ENCODE measurements at regions of chr10 and their contacts with region 1.

Region 1: DNA sequence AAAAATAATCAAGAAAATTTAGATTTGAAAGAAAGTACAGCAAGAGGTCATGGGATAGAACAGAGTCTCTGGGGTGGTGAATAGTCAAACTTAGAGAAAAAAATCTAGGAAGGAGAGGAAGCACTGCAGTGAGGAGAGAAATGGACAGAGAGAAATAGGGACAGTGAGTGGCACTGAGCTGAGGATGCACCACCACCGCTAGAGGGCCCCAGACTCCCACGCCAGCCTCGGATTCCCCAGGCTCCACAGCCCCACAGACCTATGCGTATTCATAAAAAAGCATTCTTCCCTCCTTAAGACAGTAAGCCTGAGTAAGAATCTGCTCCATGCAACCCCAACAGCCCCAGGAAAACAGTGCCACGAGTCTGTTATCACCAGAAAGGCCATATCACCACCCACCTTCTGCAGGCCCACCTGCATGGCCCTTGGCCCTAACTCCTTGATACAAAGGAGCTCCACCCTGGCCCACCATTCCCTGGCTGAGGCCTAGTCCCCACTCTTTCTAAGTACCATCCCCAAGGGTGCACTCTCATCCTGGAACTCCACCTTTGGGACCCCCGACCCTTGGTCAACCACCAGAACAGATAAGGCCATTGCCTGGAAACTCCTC is 91.0 kb downstream of the ALOX5 start:
- DNase-seq: peak; percentile 83
- ATAC-seq: peak; percentile 69
- H3K4me3 ChIP-seq: peak overlapping the region in 3 of 5 experiments; percentile 1 to 24 (median 10)
- H3K4me3 Mint-ChIP-seq: peak overlapping the region; percentile 42
- H3K27ac ChIP-seq: no peak overlapping the region
- H3K27ac Mint-ChIP-seq: peak overlapping the region; percentile 93
- H3K4me1 ChIP-seq: peaks cover 69 to 72% of the 10 kb centered on the region in 2 donors
- H3K4me1 Mint-ChIP-seq: peaks cover 89% of the 10 kb centered on the region
- H3K27me3 ChIP-seq: no peaks in the 10 kb centered on the region
- H3K27me3 Mint-ChIP-seq: no peaks in the 10 kb centered on the region
- CTCF ChIP-seq: peak; percentile 92

Region 2: DNA sequence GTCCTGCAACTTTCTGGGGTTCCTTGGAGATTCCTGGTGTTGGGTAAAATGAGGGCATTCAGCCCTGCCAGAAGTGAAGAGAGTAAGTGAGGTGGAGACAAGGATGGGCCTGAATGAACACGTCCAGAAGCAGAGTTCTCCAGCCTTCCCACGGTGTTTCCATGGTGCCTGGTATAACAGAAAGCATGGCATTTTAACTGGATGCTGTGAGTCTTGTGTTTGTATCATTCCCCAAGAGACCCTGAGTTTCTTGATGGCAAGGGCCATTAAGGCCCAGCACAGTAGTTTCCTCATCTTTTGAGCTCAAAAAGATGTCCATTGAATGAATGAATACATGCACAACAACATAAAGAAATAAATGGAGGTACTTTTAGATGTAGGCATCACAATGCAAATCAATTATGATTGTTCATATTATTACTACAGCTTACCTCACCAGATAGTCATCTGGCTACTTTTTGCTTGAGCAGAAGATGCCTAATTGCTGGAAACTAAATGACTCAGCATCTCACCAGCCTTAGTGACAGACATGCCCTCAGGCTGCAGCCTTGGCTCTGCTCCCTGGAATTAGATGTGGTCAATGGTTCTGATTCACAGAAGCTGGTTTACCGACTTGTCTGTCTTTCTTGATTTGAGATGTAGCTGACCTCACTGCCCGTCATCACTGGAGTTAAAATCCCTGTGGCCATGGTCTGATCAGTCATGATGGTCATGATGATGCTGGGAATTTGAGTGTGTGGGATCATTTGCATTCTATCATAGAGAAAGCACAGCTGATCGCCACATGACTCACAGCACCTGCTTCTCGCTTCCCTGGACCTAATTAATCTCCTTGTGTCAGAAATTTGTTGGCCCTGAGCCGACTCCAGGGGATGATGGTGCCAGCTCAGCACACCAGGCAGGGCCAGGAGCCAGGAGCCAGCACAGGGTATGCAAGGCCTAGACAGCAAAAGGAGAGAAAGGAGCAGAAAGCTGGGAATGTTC is 1164.1 kb before region 1 on chr10:
- CTCF ChIA-PET with region 1: no interaction called
- POLR2A ChIA-PET with region 1: no interaction called
- intact Hi-C with region 1: no loop called
- DNase-seq: no peak
- ATAC-seq: no peak
- H3K4me3 ChIP-seq: no peak overlapping the region
- H3K4me3 Mint-ChIP-seq: no peak overlapping the region
- H3K27ac ChIP-seq: no peak overlapping the region
- H3K27ac Mint-ChIP-seq: no peak overlapping the region
- H3K4me1 ChIP-seq: no peaks in the 10 kb centered on the region
- H3K4me1 Mint-ChIP-seq: no peaks in the 10 kb centered on the region
- H3K27me3 ChIP-seq: no peaks in the 10 kb centered on the region
- H3K27me3 Mint-ChIP-seq: no peaks in the 10 kb centered on the region
- CTCF ChIP-seq: no peak

Region 3: GRCh38 chr10:45249978-45250693 is 214.9 kb before region 1 on chr10:
- CTCF ChIA-PET with region 1: interaction called, 28 read pairs
- POLR2A ChIA-PET with region 1: interaction called, 3 read pairs
- intact Hi-C with region 1: loop called (anchors 1 kb)
- DNase-seq: peak; percentile 82
- ATAC-seq: peak; percentile 90
- H3K4me3 ChIP-seq: peak overlapping the region in 4 of 5 experiments; percentile 1 to 56 (median 44)
- H3K4me3 Mint-ChIP-seq: peak overlapping the region; percentile 86
- H3K27ac ChIP-seq: peak overlapping the region; percentile 0 to 60
- H3K27ac Mint-ChIP-seq: peak overlapping the region; percentile 82
- H3K4me1 ChIP-seq: peaks cover 15 to 18% of the 10 kb centered on the region in 2 donors
- H3K4me1 Mint-ChIP-seq: peaks cover 26% of the 10 kb centered on the region
- H3K27me3 ChIP-seq: no peaks in the 10 kb centered on the region
- H3K27me3 Mint-ChIP-seq: peaks cover 7% of the 10 kb centered on the region
- CTCF ChIP-seq: peak; percentile 83

Region 4: GRCh38 chr10:45280113-45280760 is 184.8 kb before region 1 on chr10:
- CTCF ChIA-PET with region 1: no interaction called
- POLR2A ChIA-PET with region 1: no interaction called
- intact Hi-C with region 1: no loop called
- DNase-seq: no peak
- ATAC-seq: no peak
- H3K4me3 ChIP-seq: no peak overlapping the region
- H3K4me3 Mint-ChIP-seq: no peak overlapping the region
- H3K27ac ChIP-seq: no peak overlapping the region
- H3K27ac Mint-ChIP-seq: no peak overlapping the region
- H3K4me1 ChIP-seq: no peaks in the 10 kb centered on the region
- H3K4me1 Mint-ChIP-seq: no peaks in the 10 kb centered on the region
- H3K27me3 ChIP-seq: no peaks in the 10 kb centered on the region
- H3K27me3 Mint-ChIP-seq: no peaks in the 10 kb centered on the region
- CTCF ChIP-seq: no peak

Region 5: DNA sequence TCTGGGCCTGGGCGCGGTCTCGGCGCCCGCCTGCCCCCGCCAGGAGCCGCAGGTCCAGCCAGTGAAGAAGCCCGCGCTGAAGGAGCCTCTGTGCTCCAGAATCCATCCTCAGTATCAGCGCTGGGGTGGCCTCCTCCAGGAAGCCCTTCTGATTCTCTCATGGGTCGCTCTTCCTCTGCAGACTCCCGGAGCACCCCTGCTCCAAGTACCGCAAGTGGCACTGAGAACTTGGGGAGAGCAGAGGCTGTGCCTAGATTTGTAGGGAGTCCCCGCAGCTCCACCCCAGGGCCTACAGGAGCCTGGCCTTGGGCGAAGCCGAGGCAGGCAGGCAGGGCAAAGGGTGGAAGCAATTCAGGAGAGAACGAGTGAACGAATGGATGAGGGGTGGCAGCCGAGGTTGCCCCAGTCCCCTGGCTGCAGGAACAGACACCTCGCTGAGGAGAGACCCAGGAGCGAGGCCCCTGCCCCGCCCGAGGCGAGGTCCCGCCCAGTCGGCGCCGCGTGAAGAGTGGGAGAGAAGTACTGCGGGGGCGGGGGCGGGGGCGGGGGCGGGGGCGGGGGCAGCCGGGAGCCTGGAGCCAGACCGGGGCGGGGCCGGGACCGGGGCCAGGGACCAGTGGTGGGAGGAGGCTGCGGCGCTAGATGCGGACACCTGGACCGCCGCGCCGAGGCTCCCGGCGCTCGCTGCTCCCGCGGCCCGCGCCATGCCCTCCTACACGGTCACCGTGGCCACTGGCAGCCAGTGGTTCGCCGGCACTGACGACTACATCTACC is 91.3 kb before region 1 on chr10 and contains the start of gene ALOX5:
- CTCF ChIA-PET with region 1: interaction called, 21 read pairs
- POLR2A ChIA-PET with region 1: interaction called, 12 read pairs
- intact Hi-C with region 1: loop called (anchors 2 kb)
- DNase-seq: peak; percentile 74
- ATAC-seq: peak; percentile 64
- H3K4me3 ChIP-seq: peak within 1 kb of the TSS; percentile 71 to 81 (median 77)
- H3K4me3 Mint-ChIP-seq: peak within 1 kb of the TSS; percentile 96
- H3K27ac ChIP-seq: peak within 1 kb of the TSS; percentile 78 to 89
- H3K27ac Mint-ChIP-seq: peak within 1 kb of the TSS; percentile 95
- H3K4me1 ChIP-seq: peaks cover 78 to 85% of the 10 kb centered on the region in 2 donors
- H3K4me1 Mint-ChIP-seq: peaks cover 89% of the 10 kb centered on the region
- H3K27me3 ChIP-seq: no peaks in the 10 kb centered on the region
- H3K27me3 Mint-ChIP-seq: no peaks in the 10 kb centered on the region
- CTCF ChIP-seq: no peak
- total RNA-seq, gene ALOX5: 351 and 354 TPM in 2 replicates

Region 6: DNA sequence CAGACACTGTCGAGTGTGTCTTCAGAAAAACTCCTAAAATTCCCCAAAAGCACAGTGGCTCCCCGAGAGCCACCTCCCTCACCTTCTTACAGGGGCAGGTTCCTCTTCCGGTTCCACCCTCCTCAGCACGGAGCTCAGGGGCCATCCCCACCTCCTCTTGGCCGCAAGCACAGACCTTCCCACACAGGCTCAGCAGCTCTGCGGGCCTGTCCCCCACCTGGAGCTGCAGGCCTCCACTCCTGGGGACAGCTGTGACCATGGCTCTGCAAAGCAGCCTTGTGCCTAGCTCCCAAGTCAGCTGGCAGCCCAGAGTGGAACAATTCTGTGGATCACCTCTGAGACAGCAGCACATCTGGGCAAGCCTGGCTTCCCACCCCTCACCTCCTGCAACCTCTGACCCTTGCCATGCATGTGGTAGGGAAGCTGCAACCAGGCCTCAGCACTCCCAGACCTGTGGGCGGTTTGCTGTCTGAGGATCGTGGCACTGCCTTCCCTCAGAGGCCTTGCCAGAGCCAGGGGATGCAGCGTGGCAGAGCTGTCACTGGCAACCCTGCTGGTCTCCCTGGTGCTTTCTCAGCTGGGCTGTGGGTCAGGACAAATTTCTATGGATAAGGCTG is 11.3 kb before region 1 on chr10:
- CTCF ChIA-PET with region 1: interaction called, 13 read pairs
- POLR2A ChIA-PET with region 1: interaction called, 5 read pairs
- intact Hi-C with region 1: no loop called
- DNase-seq: no peak
- ATAC-seq: no peak
- H3K4me3 ChIP-seq: no peak overlapping the region
- H3K4me3 Mint-ChIP-seq: no peak overlapping the region
- H3K27ac ChIP-seq: no peak overlapping the region
- H3K27ac Mint-ChIP-seq: peak overlapping the region; percentile 69
- H3K4me1 ChIP-seq: peaks cover 12 to 20% of the 10 kb centered on the region in 2 donors
- H3K4me1 Mint-ChIP-seq: peaks cover 36% of the 10 kb centered on the region
- H3K27me3 ChIP-seq: no peaks in the 10 kb centered on the region
- H3K27me3 Mint-ChIP-seq: no peaks in the 10 kb centered on the region
- CTCF ChIP-seq: no peak

Region 7: GRCh38 chr10:45520476-45520875 is 55.4 kb after region 1 on chr10:
- CTCF ChIA-PET with region 1: no interaction called
- POLR2A ChIA-PET with region 1: no interaction called
- intact Hi-C with region 1: no loop called
- DNase-seq: no peak
- ATAC-seq: no peak
- H3K4me3 ChIP-seq: no peak overlapping the region
- H3K4me3 Mint-ChIP-seq: no peak overlapping the region
- H3K27ac ChIP-seq: no peak overlapping the region
- H3K27ac Mint-ChIP-seq: no peak overlapping the region
- H3K4me1 ChIP-seq: peaks cover 0 to 3% of the 10 kb centered on the region in 2 donors
- H3K4me1 Mint-ChIP-seq: peaks cover 32% of the 10 kb centered on the region
- H3K27me3 ChIP-seq: no peaks in the 10 kb centered on the region
- H3K27me3 Mint-ChIP-seq: no peaks in the 10 kb centered on the region
- CTCF ChIP-seq: no peak

Region 8: GRCh38 chr10:45594276-45595106 is 129.4 kb after region 1 on chr10:
- CTCF ChIA-PET with region 1: interaction called, 6 read pairs
- POLR2A ChIA-PET with region 1: no interaction called
- intact Hi-C with region 1: loop called (anchors 1 kb)
- DNase-seq: peak; percentile 95
- ATAC-seq: peak; percentile 88
- H3K4me3 ChIP-seq: peak overlapping the region; percentile 72 to 86 (median 83)
- H3K4me3 Mint-ChIP-seq: peak overlapping the region; percentile 96
- H3K27ac ChIP-seq: peak overlapping the region; percentile 87 to 88
- H3K27ac Mint-ChIP-seq: peak overlapping the region; percentile 98
- H3K4me1 ChIP-seq: peaks cover 26% of the 10 kb centered on the region in 2 donors
- H3K4me1 Mint-ChIP-seq: peaks cover 38% of the 10 kb centered on the region
- H3K27me3 ChIP-seq: no peaks in the 10 kb centered on the region
- H3K27me3 Mint-ChIP-seq: peaks cover 6% of the 10 kb centered on the region
- CTCF ChIP-seq: no peak

Region 9: GRCh38 chr10:45672181-45673073 is 207.4 kb after region 1 on chr10 and contains the start of gene ZFAND4:
- CTCF ChIA-PET with region 1: interaction called, 90 read pairs
- POLR2A ChIA-PET with region 1: interaction called, 3 read pairs
- intact Hi-C with region 1: loop called (anchors 1 kb)
- DNase-seq: peak; percentile 97
- ATAC-seq: peak; percentile 94
- H3K4me3 ChIP-seq: peak within 1 kb of the TSS; percentile 48 to 85 (median 75)
- H3K4me3 Mint-ChIP-seq: peak within 1 kb of the TSS; percentile 92
- H3K27ac ChIP-seq: peak within 1 kb of the TSS; percentile 85 to 90
- H3K27ac Mint-ChIP-seq: peak within 1 kb of the TSS; percentile 92
- H3K4me1 ChIP-seq: peaks cover 7 to 14% of the 10 kb centered on the region in 2 donors
- H3K4me1 Mint-ChIP-seq: peaks cover 30% of the 10 kb centered on the region
- H3K27me3 ChIP-seq: no peaks in the 10 kb centered on the region
- H3K27me3 Mint-ChIP-seq: no peaks in the 10 kb centered on the region
- CTCF ChIP-seq: peak; percentile 72
- total RNA-seq, gene ZFAND4: 23.4 and 25.1 TPM in 2 replicates

Measured in B cell (primary cell).